Activated T-helper 1 cell treated with anti-CD3 and anti-CD28 coated beads, Interleukin-12 subunit alpha, Interleukin-12 subunit beta, Interleukin-2, Interleukin-4 antibody, amounts not matched to agents 30 ng/mL and 10 ng/mL and 1 ng/mL, durations not matched to agents 14 hours and 24 hours and 36 hours (primary cell): ENCODE measurements at regions of chr1 and their contacts with region 1.

Region 1: DNA sequence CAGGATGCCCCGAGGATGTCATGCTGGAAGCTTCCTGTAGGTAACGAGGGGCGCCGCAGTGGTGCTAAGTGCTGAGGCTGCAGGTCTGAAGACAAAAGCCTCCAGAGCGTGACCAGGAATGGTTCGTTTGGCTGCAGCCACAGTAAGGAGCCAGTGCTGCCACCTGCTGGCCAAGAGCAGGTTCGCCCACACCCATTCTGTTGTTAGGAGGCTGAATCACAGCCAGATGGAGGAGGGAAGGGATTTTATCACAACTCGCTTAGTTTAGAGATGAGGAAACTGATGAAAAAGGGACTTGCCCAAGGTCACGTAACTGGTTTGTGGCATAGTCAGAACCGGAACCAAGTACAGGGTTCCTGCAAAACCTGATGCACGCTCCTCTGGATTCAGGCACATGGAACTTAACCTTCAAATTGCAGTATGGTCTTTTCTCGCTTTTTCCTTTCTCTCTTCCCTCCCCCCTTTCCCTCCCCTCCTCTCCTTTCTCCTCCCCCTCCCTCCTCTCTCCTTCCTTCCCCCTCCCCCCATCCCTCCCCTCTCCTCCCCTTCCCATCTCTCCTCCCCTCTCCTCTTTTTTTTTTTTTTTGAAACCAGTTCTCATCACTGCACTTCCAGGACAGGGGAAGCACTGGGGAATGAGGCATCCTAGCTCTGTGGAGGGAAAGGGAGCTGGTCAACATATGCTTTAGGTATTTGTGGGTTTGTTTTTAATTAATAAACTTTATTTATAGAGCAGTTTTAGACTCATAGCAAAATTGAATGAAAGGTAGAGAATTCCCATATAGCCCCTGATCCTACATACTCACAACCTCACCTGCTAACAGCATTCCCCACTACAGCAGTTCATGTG is 81.8 kb downstream of the MPZL1 start:
- DNase-seq: peak; percentile 84
- H3K4me3 Mint-ChIP-seq: peak overlapping the region; percentile 58
- H3K27ac Mint-ChIP-seq: peak overlapping the region; percentile 87
- H3K4me1 Mint-ChIP-seq: peaks cover 41% of the 10 kb centered on the region
- H3K27me3 Mint-ChIP-seq: no peaks in the 10 kb centered on the region

Region 2: DNA sequence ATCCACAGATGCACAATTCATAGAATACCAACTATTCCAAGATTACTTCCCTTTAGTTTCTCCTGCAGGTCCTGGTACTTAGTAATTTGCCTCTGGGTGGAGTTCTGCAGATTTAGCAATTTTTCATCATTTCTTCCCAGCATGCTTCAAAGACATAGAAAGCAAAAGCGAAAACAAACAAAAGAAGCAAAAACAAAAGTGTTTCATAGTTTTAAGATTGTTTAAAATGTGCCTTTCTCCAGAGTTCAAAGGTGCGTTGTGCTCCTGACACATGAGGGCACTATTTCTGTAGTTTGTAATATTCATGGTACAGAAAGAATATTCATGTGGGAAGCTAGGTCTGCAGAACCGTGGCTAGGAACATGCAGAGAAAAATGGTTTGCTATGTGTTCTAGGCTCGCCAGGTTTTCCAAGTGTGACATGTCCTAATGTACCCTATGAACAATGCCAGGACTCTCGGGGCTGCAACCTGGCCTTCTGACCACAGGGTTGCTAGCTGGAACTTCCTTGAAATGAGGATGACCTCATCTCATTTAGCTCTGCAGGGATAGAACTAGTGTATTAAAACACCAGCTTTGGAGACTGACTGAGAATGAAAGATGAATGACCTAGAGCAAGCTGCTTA is 203.5 kb before region 1 on chr1:
- intact Hi-C with region 1: loop called (anchors 1 kb)
- DNase-seq: peak; percentile 38
- H3K4me3 Mint-ChIP-seq: peak overlapping the region; percentile 73
- H3K27ac Mint-ChIP-seq: peak overlapping the region; percentile 81
- H3K4me1 Mint-ChIP-seq: peaks cover 46% of the 10 kb centered on the region
- H3K27me3 Mint-ChIP-seq: peaks cover 2% of the 10 kb centered on the region

Region 3: GRCh38 chr1:167687919-167688519 is 115.6 kb before region 1 on chr1:
- intact Hi-C with region 1: loop called (anchors 1 kb)
- DNase-seq: peak; percentile 61
- H3K4me3 Mint-ChIP-seq: no peak overlapping the region
- H3K27ac Mint-ChIP-seq: peak overlapping the region; percentile 44
- H3K4me1 Mint-ChIP-seq: peaks cover 39% of the 10 kb centered on the region
- H3K27me3 Mint-ChIP-seq: no peaks in the 10 kb centered on the region

Region 4: GRCh38 chr1:167721617-167722151 is 81.9 kb before region 1 on chr1 and contains the start of gene MPZL1:
- intact Hi-C with region 1: loop called (anchors 1 kb)
- DNase-seq: peak; percentile 92
- H3K4me3 Mint-ChIP-seq: peak within 1 kb of the TSS; percentile 95
- H3K27ac Mint-ChIP-seq: peak within 1 kb of the TSS; percentile 83
- H3K4me1 Mint-ChIP-seq: peaks cover 77% of the 10 kb centered on the region
- H3K27me3 Mint-ChIP-seq: no peaks in the 10 kb centered on the region
- total RNA-seq, gene MPZL1: 40.8 and 40.9 TPM in 2 replicates

Region 5: GRCh38 chr1:167784876-167785550 is 18.6 kb before region 1 on chr1:
- intact Hi-C with region 1: loop called (anchors 2 kb)
- DNase-seq: no peak
- H3K4me3 Mint-ChIP-seq: no peak overlapping the region
- H3K27ac Mint-ChIP-seq: no peak overlapping the region
- H3K4me1 Mint-ChIP-seq: peaks cover 14% of the 10 kb centered on the region
- H3K27me3 Mint-ChIP-seq: no peaks in the 10 kb centered on the region

Region 6: GRCh38 chr1:167922023-167922422 is 118.4 kb after region 1 on chr1:
- intact Hi-C with region 1: no loop called
- DNase-seq: no peak
- H3K4me3 Mint-ChIP-seq: no peak overlapping the region
- H3K27ac Mint-ChIP-seq: no peak overlapping the region
- H3K4me1 Mint-ChIP-seq: no peaks in the 10 kb centered on the region
- H3K27me3 Mint-ChIP-seq: no peaks in the 10 kb centered on the region